PC-9 (cell line): ENCODE measurements at regions of chr1 and their contacts with region 1.

Region 1: DNA sequence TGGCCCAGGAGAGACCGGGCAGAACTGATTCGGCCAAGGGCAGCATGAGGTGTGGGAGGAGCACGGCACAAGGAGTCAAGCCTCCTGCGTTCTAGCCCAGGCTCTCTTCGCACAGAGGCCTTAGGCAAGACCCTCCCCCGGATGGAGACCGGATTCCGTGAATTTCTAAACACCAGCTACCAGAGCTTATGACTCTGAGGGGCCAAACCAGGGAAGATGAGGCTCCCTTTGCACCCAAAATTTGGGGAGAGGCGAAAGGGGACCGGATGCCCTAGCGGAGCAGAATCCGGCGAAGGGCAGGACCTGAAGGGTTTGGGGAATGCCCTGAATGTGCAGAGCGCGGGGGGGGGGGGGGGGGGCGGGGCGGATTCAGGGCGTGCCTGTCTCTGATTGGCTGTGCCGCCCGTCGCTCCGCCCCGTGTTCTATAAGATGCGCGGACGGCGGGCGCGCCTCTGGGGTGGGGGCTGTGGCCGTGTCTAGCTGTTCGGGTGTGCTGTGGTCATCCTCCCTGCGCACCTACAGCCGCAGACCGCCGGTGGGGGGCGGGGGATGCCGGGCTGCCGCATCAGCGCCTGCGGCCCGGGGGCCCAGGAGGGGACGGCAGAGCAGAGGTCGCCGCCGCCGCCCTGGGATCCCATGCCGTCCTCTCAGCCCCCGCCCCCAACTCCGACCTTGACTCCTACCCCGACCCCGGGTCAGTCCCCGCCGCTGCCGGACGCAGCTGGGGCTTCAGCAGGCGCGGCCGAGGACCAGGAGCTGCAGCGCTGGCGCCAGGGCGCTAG is at the start of gene TRNP1:
- DNase-seq: peak; percentile 45 to 76
- H3K4me3 ChIP-seq: peak within 1 kb of the TSS; percentile 62
- H3K27ac ChIP-seq: no peak within 1 kb of the TSS
- H3K4me1 ChIP-seq: peaks cover 49% of the 10 kb centered on the region
- H3K27me3 ChIP-seq: no peaks in the 10 kb centered on the region
- CTCF ChIP-seq: no peak
- total RNA-seq, gene TRNP1: 7.4 and 7.9 TPM in 2 replicates

Region 2: GRCh38 chr1:26965640-26966039 is 27.8 kb before region 1 on chr1:
- CTCF ChIA-PET with region 1: interaction called, 3 read pairs
- POLR2A ChIA-PET with region 1: no interaction called
- intact Hi-C with region 1: loop called (anchors 2 kb)
- DNase-seq: no peak
- H3K4me3 ChIP-seq: no peak overlapping the region
- H3K27ac ChIP-seq: no peak overlapping the region
- H3K4me1 ChIP-seq: peaks cover 19% of the 10 kb centered on the region
- H3K27me3 ChIP-seq: no peaks in the 10 kb centered on the region
- CTCF ChIP-seq: no peak

Region 3: DNA sequence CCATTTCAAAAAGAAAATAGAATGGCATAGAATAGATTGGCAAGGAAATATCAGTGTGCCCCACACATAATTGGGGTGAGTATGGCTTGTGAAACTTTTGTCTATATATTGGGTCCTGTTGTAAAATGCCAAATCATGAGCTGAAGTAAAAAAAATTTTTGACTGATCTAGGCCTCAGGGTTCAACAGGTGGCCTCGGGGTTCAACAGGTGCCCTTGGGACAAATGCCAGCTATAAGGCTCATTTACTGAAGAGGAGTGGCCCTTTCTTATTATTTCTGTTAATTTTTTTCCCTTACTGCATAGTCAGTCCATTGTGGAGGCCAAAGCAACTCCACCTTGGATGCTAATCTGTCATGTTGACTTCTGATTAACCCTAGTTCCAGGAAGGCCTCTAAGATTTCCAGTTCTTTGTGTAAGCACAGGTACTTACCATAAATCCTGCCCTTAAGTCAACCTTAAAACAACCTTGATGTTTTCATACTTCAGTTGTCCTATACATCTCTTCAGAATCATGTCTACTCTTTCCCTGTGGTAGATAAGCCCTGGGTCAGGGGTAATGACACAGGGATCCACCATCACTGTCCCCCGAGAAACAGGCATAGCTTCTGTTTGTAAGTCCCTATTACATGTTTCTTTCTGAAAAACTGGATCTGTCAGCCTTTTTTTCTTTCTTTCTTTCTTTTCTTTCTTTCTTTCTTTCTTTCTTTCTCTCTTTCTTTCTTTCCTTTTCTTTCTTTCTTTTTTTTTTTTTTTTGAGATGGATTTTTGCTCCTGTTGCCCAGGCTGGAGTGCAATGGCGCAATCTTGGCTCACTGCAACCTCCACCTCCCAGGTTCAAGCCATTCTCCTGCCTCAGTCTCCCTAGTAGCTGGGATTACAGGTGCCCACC is 16.6 kb before region 1 on chr1:
- CTCF ChIA-PET with region 1: interaction called, 12 read pairs
- POLR2A ChIA-PET with region 1: no interaction called
- intact Hi-C with region 1: no loop called
- DNase-seq: no peak
- H3K4me3 ChIP-seq: no peak overlapping the region
- H3K27ac ChIP-seq: no peak overlapping the region
- H3K4me1 ChIP-seq: no peaks in the 10 kb centered on the region
- H3K27me3 ChIP-seq: no peaks in the 10 kb centered on the region
- CTCF ChIP-seq: no peak

Region 4: DNA sequence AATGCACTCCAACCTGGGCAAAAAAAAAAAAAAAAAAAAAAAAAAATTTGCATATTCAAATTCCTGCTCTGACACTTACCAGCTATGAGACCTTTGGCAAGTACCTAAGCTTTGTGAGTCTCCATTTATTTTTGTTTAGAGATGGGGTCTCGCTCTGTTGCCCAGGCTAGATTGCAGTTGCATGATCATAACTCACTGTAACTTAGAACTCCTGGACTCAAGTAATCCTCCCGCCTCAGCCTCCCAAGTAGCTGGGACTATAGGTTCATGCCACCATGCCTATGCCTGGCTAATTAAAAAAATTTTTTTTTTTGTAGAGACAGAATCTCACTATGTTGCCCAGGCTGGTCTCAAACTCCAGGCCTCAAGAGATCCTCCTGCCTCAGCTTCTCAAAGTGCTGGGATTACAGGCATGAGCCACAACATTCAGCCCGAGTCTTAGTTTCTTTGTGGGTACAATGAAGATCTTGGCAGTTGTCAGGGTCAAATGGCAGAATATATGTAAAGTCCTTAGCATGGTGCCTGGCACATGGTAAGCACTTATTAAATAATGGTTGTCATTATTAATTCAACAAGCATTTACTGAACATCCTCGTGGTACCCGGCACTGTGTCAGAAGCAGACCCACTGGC is 72.7 kb after region 1 on chr1:
- CTCF ChIA-PET with region 1: no interaction called
- POLR2A ChIA-PET with region 1: no interaction called
- intact Hi-C with region 1: no loop called
- DNase-seq: no peak
- H3K4me3 ChIP-seq: no peak overlapping the region
- H3K27ac ChIP-seq: no peak overlapping the region
- H3K4me1 ChIP-seq: no peaks in the 10 kb centered on the region
- H3K27me3 ChIP-seq: no peaks in the 10 kb centered on the region
- CTCF ChIP-seq: no peak